Mammary epithelial cell (primary cell): ENCODE measurements at regions of chr13 and their contacts with region 1.

Region 1: DNA sequence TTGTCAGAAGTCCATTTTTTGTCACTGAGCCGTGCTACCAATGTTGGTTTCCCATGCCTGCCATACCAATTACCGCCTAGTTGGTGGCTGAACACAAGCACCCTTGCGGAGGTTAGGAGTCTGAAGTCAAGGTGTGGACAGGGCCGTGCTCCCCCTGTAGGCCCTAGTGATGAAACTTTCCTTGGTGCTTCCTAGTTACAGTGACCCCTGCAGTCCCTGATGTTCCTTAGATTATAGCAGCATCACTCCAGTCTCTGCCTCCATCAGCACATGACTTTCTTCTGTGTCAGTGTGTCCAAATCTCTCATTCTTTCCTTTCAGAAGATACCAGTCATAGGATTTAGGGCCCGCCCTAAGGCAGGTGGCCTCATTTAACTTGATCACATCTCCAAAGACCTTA is 99.0 kb downstream of the MYO16 start:
- DNase-seq: no peak
- H3K4me3 ChIP-seq: no peak overlapping the region
- H3K27ac ChIP-seq: no peak overlapping the region
- H3K4me1 ChIP-seq: no peaks in the 10 kb centered on the region
- H3K27me3 ChIP-seq: no peaks in the 10 kb centered on the region
- CTCF ChIP-seq: no peak

Region 2: GRCh38 chr13:108621462-108621861 is 106.9 kb before region 1 on chr13:
- CTCF ChIA-PET with region 1: no interaction called
- dilution Hi-C with region 1: loop called (anchors 5 kb)
- in situ Hi-C with region 1: no loop called
- intact Hi-C with region 1: no loop called
- DNase-seq: no peak
- H3K4me3 ChIP-seq: no peak overlapping the region
- H3K27ac ChIP-seq: no peak overlapping the region
- H3K4me1 ChIP-seq: no peaks in the 10 kb centered on the region
- H3K27me3 ChIP-seq: peaks cover 2% of the 10 kb centered on the region
- CTCF ChIP-seq: no peak

Region 3: GRCh38 chr13:108700435-108701170 is 27.8 kb before region 1 on chr13:
- CTCF ChIA-PET with region 1: no interaction called
- dilution Hi-C with region 1: no loop called
- in situ Hi-C with region 1: no loop called
- intact Hi-C with region 1: no loop called
- DNase-seq: peak; percentile 32
- H3K4me3 ChIP-seq: no peak overlapping the region
- H3K27ac ChIP-seq: no peak overlapping the region
- H3K4me1 ChIP-seq: no peaks in the 10 kb centered on the region
- H3K27me3 ChIP-seq: peaks cover 2% of the 10 kb centered on the region
- CTCF ChIP-seq: no peak

Region 4: DNA sequence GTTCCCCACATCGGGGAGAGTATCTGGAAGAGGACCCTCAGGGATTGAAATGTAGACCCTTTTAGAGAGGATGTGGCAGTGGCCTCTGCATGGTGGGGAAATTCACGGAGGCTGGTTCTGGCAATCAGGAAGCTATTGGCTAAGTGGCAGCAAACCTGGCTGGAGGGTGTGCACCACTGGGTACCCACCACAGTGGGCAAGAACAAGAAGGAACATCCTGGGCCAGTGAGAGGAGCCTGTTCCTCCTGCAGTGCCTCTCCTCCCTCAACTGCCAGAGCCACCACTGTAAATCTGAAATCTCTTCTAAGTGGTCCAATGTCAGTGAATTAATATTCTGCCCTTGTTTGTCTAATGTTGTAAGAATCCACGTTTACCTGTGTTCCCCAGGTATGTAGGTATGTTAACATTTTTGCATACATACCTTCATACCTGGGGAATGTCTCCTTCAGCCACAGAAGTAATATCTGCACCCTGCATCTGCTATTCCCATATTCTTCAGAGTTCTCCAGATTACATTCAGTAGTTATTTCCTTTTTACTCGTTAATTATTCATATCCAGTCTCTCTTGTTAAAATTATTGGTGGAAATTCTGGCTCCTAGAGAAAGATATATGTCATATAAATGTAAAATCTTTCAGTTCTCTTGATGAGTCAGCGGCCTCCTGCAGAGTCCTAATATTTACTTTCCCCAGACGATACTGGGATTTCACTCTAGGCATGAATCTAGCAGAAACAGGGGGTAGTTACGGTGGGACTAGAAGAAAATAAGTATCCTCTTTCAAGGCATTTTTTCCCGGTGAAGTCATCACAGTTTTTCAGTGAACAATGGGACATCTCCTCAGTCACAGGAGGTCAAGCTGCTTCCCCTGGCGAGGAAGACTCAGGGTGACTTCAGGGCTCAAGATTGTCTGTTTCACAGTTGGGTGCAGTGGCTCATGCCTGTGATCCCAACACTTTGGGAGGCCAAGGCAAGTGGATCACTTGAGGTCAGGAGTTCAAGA is 49.4 kb after region 1 on chr13:
- CTCF ChIA-PET with region 1: no interaction called
- dilution Hi-C with region 1: no loop called
- in situ Hi-C with region 1: no loop called
- intact Hi-C with region 1: no loop called
- DNase-seq: no peak
- H3K4me3 ChIP-seq: no peak overlapping the region
- H3K27ac ChIP-seq: no peak overlapping the region
- H3K4me1 ChIP-seq: no peaks in the 10 kb centered on the region
- H3K27me3 ChIP-seq: no peaks in the 10 kb centered on the region
- CTCF ChIP-seq: no peak

Region 5: DNA sequence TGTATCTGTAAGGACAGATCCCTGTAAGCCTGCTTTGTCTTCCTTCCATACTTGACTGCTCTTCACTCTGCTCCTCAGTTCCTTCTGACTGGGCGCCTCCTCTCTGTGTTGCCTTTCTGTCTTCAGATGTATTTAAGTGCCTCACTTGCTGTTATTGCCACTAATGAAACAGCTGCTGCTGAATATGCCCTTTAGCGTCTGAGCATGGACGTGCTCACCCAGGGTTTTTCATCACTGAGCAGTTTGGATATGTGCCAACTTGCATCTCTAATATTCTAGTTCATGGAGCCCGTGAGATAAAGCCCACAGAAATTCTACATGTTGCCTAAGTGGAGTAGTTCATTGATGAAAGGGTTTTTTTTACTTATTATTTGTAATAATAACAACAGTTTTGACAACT is 99.3 kb after region 1 on chr13:
- CTCF ChIA-PET with region 1: no interaction called
- dilution Hi-C with region 1: loop called (anchors 5 kb)
- in situ Hi-C with region 1: no loop called
- intact Hi-C with region 1: no loop called
- DNase-seq: peak; percentile 42
- H3K4me3 ChIP-seq: no peak overlapping the region
- H3K27ac ChIP-seq: no peak overlapping the region
- H3K4me1 ChIP-seq: no peaks in the 10 kb centered on the region
- H3K27me3 ChIP-seq: no peaks in the 10 kb centered on the region
- CTCF ChIP-seq: no peak